Posterior vena cava (tissue), 2 donors: ENCODE measurements at regions of chr2 and their contacts with region 1.

Region 1: GRCh38 chr2:160238046-160238791 is 38.1 kb upstream of the ITGB6 start:
- DNase-seq: no peak

Region 2: GRCh38 chr2:159349674-159350299 is 888.4 kb before region 1 on chr2:
- intact Hi-C with region 1: loop called in 1 of 2 experiments (anchors 5 kb)
- DNase-seq: no peak

Region 3: GRCh38 chr2:160406591-160407392 is 168.6 kb after region 1 on chr2:
- intact Hi-C with region 1: no loop called
- DNase-seq: peak; percentile 85